ENCODE measurements at regions of chr1 and their contacts with region 1.

Region 1: GRCh38 chr1:175742790-175743459 is 470 bp downstream of the TNR start:
- DNase-seq: no peak

Region 2: DNA sequence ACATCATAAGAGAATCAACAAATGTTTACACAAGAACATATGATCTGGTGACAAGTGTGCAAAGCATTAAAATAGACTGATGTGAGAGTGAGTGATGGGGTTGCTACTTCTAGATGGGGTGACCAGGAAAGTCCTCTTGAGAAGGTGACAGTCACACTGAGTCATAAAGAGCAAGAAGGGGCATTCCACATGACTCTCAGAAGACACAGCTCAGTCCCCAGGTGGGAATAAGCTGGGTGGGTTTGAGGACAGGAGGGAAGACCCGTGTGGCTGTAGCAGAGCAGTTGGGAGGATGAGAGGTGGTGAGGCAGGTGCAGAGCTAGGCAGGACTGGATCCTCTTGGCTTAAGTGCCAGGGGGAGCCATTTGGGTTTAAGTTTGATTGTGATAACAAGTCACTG is 52.6 kb before region 1 on chr1:
- intact Hi-C with region 1: no loop called
- DNase-seq: no peak

Region 3: DNA sequence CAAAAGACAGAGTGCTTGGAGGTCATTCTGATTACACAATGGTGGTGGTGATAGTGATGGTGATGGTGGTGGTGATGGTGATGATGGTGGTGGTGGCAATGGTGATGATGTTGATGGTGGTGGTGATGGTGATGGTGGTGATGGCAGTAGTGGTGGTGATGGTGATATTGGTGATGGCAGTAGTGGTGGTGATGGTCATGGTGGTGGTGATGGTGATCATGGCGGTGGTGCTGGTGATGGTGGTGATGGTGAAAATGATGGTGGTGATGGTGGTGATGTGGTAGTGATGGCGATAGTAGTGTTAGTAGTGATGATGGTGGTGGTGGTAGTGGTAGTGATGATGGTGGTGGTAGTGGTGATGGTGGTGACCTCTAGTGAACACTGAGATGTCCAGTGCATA is 22.4 kb after region 1 on chr1:
- intact Hi-C with region 1: loop called in 1 of 2 experiments (anchors 1 kb)
- DNase-seq: no peak